GM23248 (cell line): ENCODE measurements at regions of chr5 and their contacts with region 1.

Region 1: DNA sequence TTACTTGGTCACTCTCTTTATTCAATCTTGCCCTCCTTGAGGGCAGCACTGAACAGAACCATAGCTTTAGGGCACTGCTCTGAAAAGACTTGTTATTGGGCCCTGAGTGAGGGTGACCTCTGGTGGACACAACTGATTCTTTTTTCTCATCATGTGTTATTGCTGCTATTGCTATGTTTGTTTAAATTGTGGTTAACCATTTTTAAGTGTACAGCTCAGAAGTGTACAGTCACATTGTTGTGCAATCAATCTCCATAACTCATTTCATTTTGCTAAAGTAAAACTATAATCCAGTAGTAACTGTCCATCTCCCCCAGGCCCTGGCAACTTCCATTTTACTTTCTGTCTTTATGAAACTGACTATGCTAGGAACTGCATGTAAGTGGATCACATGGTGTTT is 351.1 kb upstream of the RIOK2 start:
- DNase-seq: peak; percentile 87
- H3K4me3 ChIP-seq: no peak overlapping the region
- H3K27ac ChIP-seq: peak overlapping the region; percentile 12; the same call in 1 of the 2 replicates
- H3K4me1 ChIP-seq: peaks cover 16% of the 10 kb centered on the region
- H3K27me3 ChIP-seq: no peaks in the 10 kb centered on the region

Region 2: GRCh38 chr5:98796197-98796972 is 1262.2 kb after region 1 on chr5:
- in situ Hi-C with region 1: loop called (anchors 25 kb)
- DNase-seq: peak; percentile 77
- H3K4me3 ChIP-seq: no peak overlapping the region
- H3K27ac ChIP-seq: peak overlapping the region; percentile 58
- H3K4me1 ChIP-seq: peaks cover 32% of the 10 kb centered on the region
- H3K27me3 ChIP-seq: no peaks in the 10 kb centered on the region